ENCODE measurements at regions of chr13 and their contacts with region 1.

Region 1: DNA sequence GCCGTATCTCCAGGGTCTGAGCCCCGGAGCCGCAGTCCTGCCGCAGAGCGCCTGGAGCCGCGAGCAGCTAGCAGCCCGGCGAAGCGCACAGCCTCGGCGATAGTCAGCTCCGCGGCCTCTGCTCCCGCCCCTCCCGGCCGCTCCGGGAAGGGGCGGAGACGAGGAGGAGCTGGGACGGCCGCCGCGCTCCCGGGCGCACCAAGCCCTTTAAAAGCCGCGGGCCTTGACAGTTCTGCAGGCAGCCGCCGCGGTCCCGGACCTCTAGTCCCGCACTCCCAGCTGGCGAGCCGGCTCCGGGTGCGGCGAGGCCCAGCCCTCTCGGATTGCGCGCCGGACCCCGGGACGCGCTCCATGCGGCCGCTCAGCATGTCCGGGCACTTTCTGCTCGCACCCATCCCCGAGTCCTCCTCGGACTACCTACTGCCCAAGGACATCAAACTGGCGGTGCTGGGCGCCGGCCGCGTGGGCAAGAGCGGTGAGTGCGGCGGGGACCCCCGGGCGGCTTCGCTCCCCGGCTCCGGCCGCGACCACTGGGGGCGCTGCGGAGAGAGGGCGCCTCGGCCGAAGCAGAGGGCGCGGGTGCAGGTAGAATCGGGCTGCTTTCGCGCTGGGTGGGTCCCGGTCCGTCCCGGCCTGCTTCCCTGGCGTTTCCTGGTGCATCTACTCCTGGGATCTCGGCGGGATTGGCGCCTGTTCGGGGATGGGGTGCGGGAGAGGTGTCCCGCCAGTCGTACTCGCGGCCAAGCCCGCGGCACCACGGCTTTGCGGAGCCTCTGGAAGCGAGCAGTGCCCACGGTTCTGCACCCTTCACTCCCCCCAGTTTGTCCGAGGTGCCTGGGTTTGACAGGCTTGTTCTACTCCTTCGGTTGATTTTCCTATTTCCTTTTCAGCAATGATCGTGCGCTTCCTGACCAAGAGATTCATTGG is at the start of gene RASL11A:
- DNase-seq: peak; percentile 87
- ATAC-seq: peak; percentile 93
- H3K4me3 ChIP-seq: peak within 1 kb of the TSS; percentile 89
- H3K27ac ChIP-seq: peak within 1 kb of the TSS; percentile 94
- H3K4me1 ChIP-seq: peaks cover 17% of the 10 kb centered on the region
- H3K27me3 ChIP-seq: no peaks in the 10 kb centered on the region
- CTCF ChIP-seq: peak; percentile 68
- POLR2A ChIP-seq: peak; percentile 97
- RAD21 ChIP-seq: peak; percentile 32
- total RNA-seq, gene RASL11A: 15.3 and 18.5 TPM in 2 replicates

Region 2: DNA sequence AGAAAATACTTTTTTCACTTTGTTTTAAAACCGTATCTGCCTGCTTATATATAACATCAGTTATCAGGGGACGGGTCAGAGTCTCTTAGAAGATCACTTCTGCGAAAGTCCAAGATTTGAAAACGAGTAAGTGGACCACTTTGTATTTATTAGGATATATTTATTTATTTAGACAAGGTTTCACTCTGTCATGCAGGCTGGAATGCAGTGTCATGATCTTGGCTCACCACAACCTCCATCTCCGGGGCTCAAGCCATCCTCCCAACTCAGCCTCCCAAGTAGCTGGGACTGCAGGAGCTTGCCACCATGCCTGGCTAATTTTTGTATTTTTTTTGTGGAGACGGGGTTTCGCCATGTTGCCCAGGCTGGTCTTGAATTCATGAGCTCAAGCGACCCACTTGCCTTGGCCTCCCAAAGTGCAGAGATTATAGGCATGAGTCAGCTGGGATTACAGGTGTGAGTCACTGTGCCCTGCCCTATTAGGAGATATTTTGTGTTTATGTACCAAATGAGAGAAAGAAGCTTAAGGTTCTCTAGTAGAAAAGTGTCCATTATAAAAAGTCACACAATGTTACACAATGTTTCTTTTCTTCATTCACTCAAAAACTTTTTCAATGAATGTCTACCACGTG is 39.2 kb after region 1 on chr13:
- CTCF ChIA-PET with region 1: interaction called, 3 read pairs
- POLR2A ChIA-PET with region 1: no interaction called
- dilution Hi-C with region 1: no loop called
- in situ Hi-C with region 1: no loop called
- intact Hi-C with region 1: loop called (anchors 5 kb)
- DNase-seq: peak; percentile 57
- ATAC-seq: no peak; the same call in 1 of the 2 replicates
- H3K4me3 ChIP-seq: no peak overlapping the region
- H3K27ac ChIP-seq: no peak overlapping the region
- H3K4me1 ChIP-seq: peaks cover 11% of the 10 kb centered on the region
- H3K27me3 ChIP-seq: peaks cover 6% of the 10 kb centered on the region
- CTCF ChIP-seq: no peak
- POLR2A ChIP-seq: no peak
- RAD21 ChIP-seq: no peak

Region 3: DNA sequence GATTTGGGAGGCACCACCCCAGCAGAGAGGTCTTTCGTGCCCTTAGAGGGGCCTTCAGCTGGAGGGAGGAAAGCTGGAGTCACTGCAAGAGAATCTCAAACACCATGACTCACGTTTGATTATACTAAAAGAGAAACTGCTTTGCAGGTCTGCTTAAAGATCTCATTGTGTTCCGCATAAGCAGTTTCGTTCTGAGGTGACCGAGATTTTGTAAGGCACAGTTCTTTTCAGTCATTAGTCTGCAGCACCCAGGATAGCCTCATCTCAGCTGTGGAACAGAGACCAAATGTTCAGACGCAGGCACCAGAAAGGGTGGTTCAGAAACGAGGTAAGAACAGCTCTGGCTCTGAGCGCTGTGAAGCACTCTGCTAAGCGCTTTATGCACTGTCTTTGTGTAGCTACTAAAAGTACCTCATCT is 82.3 kb after region 1 on chr13:
- CTCF ChIA-PET with region 1: no interaction called
- POLR2A ChIA-PET with region 1: interaction called, 4 read pairs
- dilution Hi-C with region 1: no loop called
- in situ Hi-C with region 1: loop called (anchors 5 kb)
- intact Hi-C with region 1: loop called (anchors 1 kb)
- DNase-seq: peak; percentile 88
- ATAC-seq: peak; percentile 84
- H3K4me3 ChIP-seq: peak overlapping the region; percentile 27
- H3K27ac ChIP-seq: peak overlapping the region; percentile 94
- H3K4me1 ChIP-seq: peaks cover 28% of the 10 kb centered on the region
- H3K27me3 ChIP-seq: no peaks in the 10 kb centered on the region
- CTCF ChIP-seq: no peak
- POLR2A ChIP-seq: no peak
- RAD21 ChIP-seq: peak; percentile 9; the same call in 1 of the 2 replicates

Region 4: GRCh38 chr13:27923794-27924528 is 653.1 kb after region 1 on chr13:
- CTCF ChIA-PET with region 1: no interaction called
- POLR2A ChIA-PET with region 1: interaction called, 18 read pairs
- dilution Hi-C with region 1: no loop called
- in situ Hi-C with region 1: no loop called
- intact Hi-C with region 1: no loop called
- DNase-seq: no peak
- ATAC-seq: no peak
- H3K4me3 ChIP-seq: no peak overlapping the region
- H3K27ac ChIP-seq: no peak overlapping the region
- H3K4me1 ChIP-seq: peaks cover 3% of the 10 kb centered on the region; the same call in 1 of the 2 replicates
- H3K27me3 ChIP-seq: peaks cover 95% of the 10 kb centered on the region
- CTCF ChIP-seq: no peak
- POLR2A ChIP-seq: no peak
- RAD21 ChIP-seq: no peak